ENCODE measurements at regions of chr15 and their contacts with region 1.

Region 1: DNA sequence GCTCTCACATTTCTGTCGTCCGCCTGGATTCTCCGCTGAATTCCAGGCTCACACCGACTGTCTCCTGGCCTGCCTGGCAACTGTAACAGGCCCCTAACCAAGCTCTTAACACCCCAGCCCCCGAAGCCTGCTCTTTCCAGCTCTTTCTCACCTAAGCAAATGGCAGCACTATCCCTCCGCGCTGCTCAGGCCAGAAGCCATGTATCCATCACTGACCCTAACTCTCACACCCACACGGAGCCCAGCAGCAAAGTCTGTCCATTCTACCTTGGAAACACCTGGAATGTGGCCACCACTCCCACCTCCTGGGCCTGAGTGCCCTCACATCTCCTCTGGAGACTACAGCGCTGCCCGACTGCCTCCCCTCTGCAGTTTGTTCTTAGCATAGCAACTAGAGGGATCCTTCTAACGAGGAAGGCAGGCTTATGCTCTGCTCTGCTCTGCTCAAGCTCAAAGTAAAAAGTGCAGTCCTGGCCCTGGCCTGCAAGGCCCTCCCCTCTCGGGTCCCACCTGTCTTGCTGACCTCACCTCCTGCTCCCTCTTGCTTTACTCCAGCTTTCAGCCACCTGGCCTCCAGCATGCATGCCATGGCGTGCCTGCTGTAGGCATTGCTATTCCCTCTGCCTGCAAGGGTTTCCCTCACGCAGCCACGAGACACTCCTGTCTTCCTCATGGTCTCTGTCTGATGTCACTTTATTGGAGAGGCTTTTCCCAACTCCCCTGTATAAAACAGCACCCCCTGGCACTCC is 27.2 kb downstream of the FEM1B start:
- DNase-seq: no peak
- ATAC-seq: no peak
- H3K4me3 ChIP-seq: no peak overlapping the region
- H3K27ac ChIP-seq: no peak overlapping the region
- H3K4me1 ChIP-seq: peaks cover 0 to 33% of the 10 kb centered on the region in 2 experiments; a peak in 3 of 4 replicates
- H3K27me3 ChIP-seq: no peaks in the 10 kb centered on the region
- CTCF ChIP-seq: no peak
- POLR2A ChIP-seq: no peak
- RAD21 ChIP-seq: no peak

Region 2: GRCh38 chr15:68187559-68187958 is 117.2 kb before region 1 on chr15:
- CTCF ChIA-PET with region 1: no interaction called
- POLR2A ChIA-PET with region 1: no interaction called
- RAD21 ChIA-PET with region 1: no interaction called
- intact Hi-C with region 1: no loop called
- DNase-seq: no peak
- ATAC-seq: no peak
- H3K4me3 ChIP-seq: no peak overlapping the region
- H3K27ac ChIP-seq: no peak overlapping the region
- H3K4me1 ChIP-seq: no peaks in the 10 kb centered on the region
- H3K27me3 ChIP-seq: no peaks in the 10 kb centered on the region
- CTCF ChIP-seq: no peak
- POLR2A ChIP-seq: no peak
- RAD21 ChIP-seq: no peak

Region 3: GRCh38 chr15:68252925-68253534 is 51.7 kb before region 1 on chr15:
- CTCF ChIA-PET with region 1: interaction called, 71 read pairs
- POLR2A ChIA-PET with region 1: interaction called, 3 read pairs
- RAD21 ChIA-PET with region 1: interaction called, 10 to 19 read pairs
- intact Hi-C with region 1: loop called (anchors 1 kb)
- DNase-seq: peak; percentile 79
- ATAC-seq: peak; percentile 97
- H3K4me3 ChIP-seq: no peak overlapping the region
- H3K27ac ChIP-seq: no peak overlapping the region
- H3K4me1 ChIP-seq: no peaks in the 10 kb centered on the region
- H3K27me3 ChIP-seq: no peaks in the 10 kb centered on the region
- CTCF ChIP-seq: peak; percentile 78 to 88 (median 87)
- POLR2A ChIP-seq: no peak
- RAD21 ChIP-seq: peak; percentile 90

Region 4: DNA sequence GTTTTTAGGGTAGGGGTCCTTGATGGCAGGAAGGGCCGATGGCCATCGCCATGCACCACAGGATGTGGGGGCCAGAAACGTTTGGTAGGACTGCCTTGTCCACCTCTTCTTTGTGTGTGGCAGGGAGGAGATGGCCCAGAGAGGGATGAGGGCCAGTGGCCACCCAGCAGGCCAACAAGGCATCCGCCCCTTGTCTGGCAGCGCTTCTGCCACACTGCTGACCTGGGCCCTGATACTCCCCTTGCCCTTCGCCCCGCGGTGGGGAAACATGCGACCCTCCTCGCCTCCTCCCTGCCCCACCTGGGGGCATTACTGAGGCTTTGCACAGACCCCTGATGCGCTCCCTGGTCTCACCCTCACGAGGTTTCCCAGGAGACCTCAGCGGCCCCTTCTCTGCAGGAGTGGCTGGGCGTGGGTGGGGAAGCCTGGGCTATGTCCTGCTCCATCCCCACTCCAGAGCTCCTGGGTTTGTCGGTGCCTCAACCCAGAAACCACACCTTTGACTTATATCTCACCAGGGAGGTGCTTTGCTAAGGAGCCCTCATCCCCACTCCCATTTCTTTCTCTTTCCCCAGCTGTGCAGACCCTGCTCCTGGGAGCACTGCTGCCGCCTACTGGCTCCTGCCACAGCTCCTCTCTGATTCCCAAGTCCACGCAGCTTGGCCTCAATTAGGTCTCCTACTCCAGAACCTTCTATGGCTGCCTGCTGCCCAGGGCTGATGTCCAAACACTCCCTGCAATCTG is 11.5 kb after region 1 on chr15:
- CTCF ChIA-PET with region 1: interaction called, 17 read pairs
- POLR2A ChIA-PET with region 1: interaction called, 3 read pairs
- RAD21 ChIA-PET with region 1: no interaction called
- intact Hi-C with region 1: no loop called
- DNase-seq: no peak
- ATAC-seq: peak; percentile 81
- H3K4me3 ChIP-seq: no peak overlapping the region
- H3K27ac ChIP-seq: no peak overlapping the region
- H3K4me1 ChIP-seq: no peaks in the 10 kb centered on the region
- H3K27me3 ChIP-seq: no peaks in the 10 kb centered on the region
- CTCF ChIP-seq: peak in 2 of 3 experiments; percentile 47 to 65; a peak in 4 of 6 replicates
- POLR2A ChIP-seq: no peak
- RAD21 ChIP-seq: peak; percentile 38; the same call in 1 of the 2 replicates

Region 5: GRCh38 chr15:68360721-68361120 is 56.0 kb after region 1 on chr15:
- CTCF ChIA-PET with region 1: no interaction called
- POLR2A ChIA-PET with region 1: no interaction called
- RAD21 ChIA-PET with region 1: no interaction called
- intact Hi-C with region 1: no loop called
- DNase-seq: no peak
- ATAC-seq: no peak
- H3K4me3 ChIP-seq: no peak overlapping the region
- H3K27ac ChIP-seq: no peak overlapping the region
- H3K4me1 ChIP-seq: peaks cover 0 to under 1% of the 10 kb centered on the region in 2 experiments; a peak in 1 of 4 replicates
- H3K27me3 ChIP-seq: no peaks in the 10 kb centered on the region; the same call in 1 of the 2 replicates
- CTCF ChIP-seq: no peak
- POLR2A ChIP-seq: no peak
- RAD21 ChIP-seq: no peak

Region 6: GRCh38 chr15:68372291-68372811 is 67.6 kb after region 1 on chr15:
- CTCF ChIA-PET with region 1: interaction called, 8 read pairs
- POLR2A ChIA-PET with region 1: no interaction called
- RAD21 ChIA-PET with region 1: interaction called in 1 of 2 experiments, 4 read pairs
- intact Hi-C with region 1: loop called (anchors 1 kb)
- DNase-seq: peak; percentile 18
- ATAC-seq: peak; percentile 100
- H3K4me3 ChIP-seq: peak overlapping the region in 1 of 2 experiments; percentile 19; a peak in 3 of 4 replicates
- H3K27ac ChIP-seq: 0 out of 2 replicates have a peak overlapping the region, but pooled peaks have one; percentile 15
- H3K4me1 ChIP-seq: peaks cover 3 to 10% of the 10 kb centered on the region in 2 experiments; a peak in 3 of 4 replicates
- H3K27me3 ChIP-seq: no peaks in the 10 kb centered on the region
- CTCF ChIP-seq: peak; percentile 39 to 77 (median 64); a peak in 5 of 6 replicates
- POLR2A ChIP-seq: no peak
- RAD21 ChIP-seq: peak; percentile 47

Region 7: GRCh38 chr15:68383161-68384074 is 78.7 kb after region 1 on chr15:
- CTCF ChIA-PET with region 1: interaction called, 3 read pairs
- POLR2A ChIA-PET with region 1: no interaction called
- RAD21 ChIA-PET with region 1: no interaction called
- intact Hi-C with region 1: loop called (anchors 1 kb)
- DNase-seq: peak; percentile 36
- ATAC-seq: peak; percentile 88
- H3K4me3 ChIP-seq: no peak overlapping the region
- H3K27ac ChIP-seq: no peak overlapping the region
- H3K4me1 ChIP-seq: no peaks in the 10 kb centered on the region; a peak in 1 of 4 replicates
- H3K27me3 ChIP-seq: peaks cover 12% of the 10 kb centered on the region
- CTCF ChIP-seq: peak; percentile 70 to 87 (median 86)
- POLR2A ChIP-seq: no peak
- RAD21 ChIP-seq: peak; percentile 71